ENCODE measurements at regions of chr5 and their contacts with region 1.

Region 1: GRCh38 chr5:43389679-43390329 is 22.4 kb downstream of the CCL28 start:
- DNase-seq: peak; percentile 86
- H3K4me3 ChIP-seq: no peak overlapping the region
- H3K27ac ChIP-seq: no peak overlapping the region
- H3K4me1 ChIP-seq: peaks cover 9% of the 10 kb centered on the region
- H3K27me3 ChIP-seq: no peaks in the 10 kb centered on the region
- CTCF ChIP-seq: peak; percentile 81 to 91

Region 2: DNA sequence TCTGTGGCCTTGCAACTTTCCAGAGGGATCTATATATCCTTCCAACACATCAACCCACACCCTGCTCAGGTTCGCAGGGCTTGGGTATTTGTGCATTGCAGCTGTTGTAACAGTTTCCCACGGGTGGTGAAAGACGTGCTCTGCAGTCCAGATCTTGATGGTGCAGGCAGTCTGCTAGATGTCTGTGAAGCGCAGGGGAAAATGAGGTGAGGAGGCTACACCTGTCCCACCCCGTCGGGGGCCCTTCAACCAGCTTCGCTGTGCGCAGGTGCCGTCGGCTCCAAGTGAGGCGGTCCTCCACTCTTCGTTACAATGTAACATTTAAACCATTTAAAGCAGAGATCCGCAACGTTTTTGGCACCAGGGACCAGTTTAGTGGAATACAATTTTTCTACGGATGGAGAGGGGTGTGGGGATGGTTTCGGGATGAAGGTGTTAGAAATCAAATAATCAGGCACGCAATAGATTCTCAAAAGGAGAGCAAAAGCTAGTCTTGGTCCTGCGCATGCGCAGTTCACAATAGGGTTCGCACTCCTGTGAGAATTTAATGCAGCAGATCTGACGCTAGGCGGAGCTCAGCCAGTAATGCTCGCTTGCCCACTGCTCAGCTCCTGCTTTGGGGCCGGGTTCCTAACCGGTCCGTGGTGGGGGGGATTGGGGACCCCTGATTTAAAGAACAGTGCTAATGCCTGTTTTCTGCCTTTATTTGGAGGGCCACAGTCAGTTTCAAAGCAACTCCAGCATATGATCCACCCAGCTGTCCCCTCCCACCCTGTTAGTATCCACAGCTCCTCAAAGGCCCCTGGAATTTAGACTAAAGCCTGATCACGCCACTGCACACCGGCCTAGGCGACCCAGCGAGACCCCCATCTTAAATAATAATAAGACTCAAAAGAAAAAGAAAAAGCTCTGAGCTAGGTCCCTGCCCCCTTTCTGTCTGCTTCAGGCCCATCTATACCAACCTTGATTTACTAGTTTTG is 481.0 kb before region 1 on chr5:
- CTCF ChIA-PET with region 1: no interaction called
- dilution Hi-C with region 1: no loop called
- in situ Hi-C with region 1: loop called (anchors 25 kb)
- intact Hi-C with region 1: loop called (anchors 1 kb)
- DNase-seq: peak; percentile 71
- H3K4me3 ChIP-seq: peak overlapping the region; percentile 45 to 52 (median 46)
- H3K27ac ChIP-seq: no peak overlapping the region
- H3K4me1 ChIP-seq: no peaks in the 10 kb centered on the region
- H3K27me3 ChIP-seq: no peaks in the 10 kb centered on the region
- CTCF ChIP-seq: peak; percentile 79 to 86

Region 3: GRCh38 chr5:43105369-43106289 is 284.2 kb before region 1 on chr5:
- CTCF ChIA-PET with region 1: no interaction called
- dilution Hi-C with region 1: no loop called
- in situ Hi-C with region 1: loop called in 1 of 2 experiments (anchors 10 kb)
- intact Hi-C with region 1: loop called (anchors 1 kb)
- DNase-seq: peak; percentile 88
- H3K4me3 ChIP-seq: peak overlapping the region; percentile 6 to 42 (median 35)
- H3K27ac ChIP-seq: no peak overlapping the region
- H3K4me1 ChIP-seq: peaks cover 4% of the 10 kb centered on the region
- H3K27me3 ChIP-seq: no peaks in the 10 kb centered on the region
- CTCF ChIP-seq: peak; percentile 100

Region 4: GRCh38 chr5:43227655-43228054 is 162.1 kb before region 1 on chr5:
- CTCF ChIA-PET with region 1: interaction called, 4 read pairs
- dilution Hi-C with region 1: no loop called
- in situ Hi-C with region 1: loop called (anchors 5 kb)
- intact Hi-C with region 1: loop called (anchors 1 kb)
- DNase-seq: peak; percentile 38
- H3K4me3 ChIP-seq: no peak overlapping the region
- H3K27ac ChIP-seq: no peak overlapping the region
- H3K4me1 ChIP-seq: no peaks in the 10 kb centered on the region
- H3K27me3 ChIP-seq: no peaks in the 10 kb centered on the region
- CTCF ChIP-seq: peak; percentile 51 to 55

Region 5: GRCh38 chr5:43281840-43282658 is 107.8 kb before region 1 on chr5:
- CTCF ChIA-PET with region 1: no interaction called
- dilution Hi-C with region 1: no loop called
- in situ Hi-C with region 1: no loop called
- intact Hi-C with region 1: no loop called
- DNase-seq: peak; percentile 70
- H3K4me3 ChIP-seq: no peak overlapping the region
- H3K27ac ChIP-seq: no peak overlapping the region
- H3K4me1 ChIP-seq: peaks cover 20% of the 10 kb centered on the region
- H3K27me3 ChIP-seq: no peaks in the 10 kb centered on the region
- CTCF ChIP-seq: peak in 1 of 2 donors; percentile 13

Region 6: DNA sequence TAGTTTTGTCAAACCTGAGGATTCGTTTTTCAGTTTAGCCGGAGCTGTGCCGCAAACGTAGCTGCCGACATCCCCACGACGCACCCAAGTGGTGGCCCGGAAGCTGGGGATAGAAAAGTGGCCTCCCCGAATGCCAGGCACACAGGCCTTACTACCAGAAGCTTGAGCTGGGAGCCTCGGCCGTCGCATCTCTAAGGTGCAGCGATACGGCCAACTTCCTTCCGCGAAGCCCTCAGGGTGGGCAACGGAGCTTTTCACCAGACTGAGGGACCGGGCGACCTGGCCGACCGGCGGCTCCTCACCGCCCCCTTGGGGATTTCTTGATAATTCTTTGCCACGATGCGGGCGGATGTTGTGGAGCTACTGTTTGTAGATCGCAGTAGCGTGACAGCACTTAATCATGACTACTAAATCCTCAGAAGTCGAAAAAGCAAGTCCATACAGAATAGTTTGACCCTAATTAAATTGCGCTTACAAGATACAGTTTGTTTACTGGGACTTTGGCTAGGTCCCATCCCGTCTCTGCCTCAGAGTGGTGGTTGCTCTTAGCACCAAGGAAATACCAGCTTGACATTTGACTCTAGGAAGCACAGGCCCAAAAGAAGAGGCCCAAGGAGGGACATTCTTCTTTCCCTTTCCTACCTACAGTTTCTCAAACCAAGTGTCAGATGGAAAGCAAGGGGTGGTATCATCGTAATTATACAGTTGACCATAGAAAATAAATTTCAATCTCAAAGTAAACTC is 94.5 kb after region 1 on chr5:
- CTCF ChIA-PET with region 1: interaction called, 3 read pairs
- dilution Hi-C with region 1: no loop called
- in situ Hi-C with region 1: loop called in 1 of 2 experiments (anchors 10 kb)
- intact Hi-C with region 1: no loop called
- DNase-seq: peak; percentile 80
- H3K4me3 ChIP-seq: peak overlapping the region; percentile 88 to 94 (median 92)
- H3K27ac ChIP-seq: peak overlapping the region; percentile 90
- H3K4me1 ChIP-seq: peaks cover 4% of the 10 kb centered on the region
- H3K27me3 ChIP-seq: no peaks in the 10 kb centered on the region
- CTCF ChIP-seq: peak; percentile 71 to 73

Measured in mammary epithelial cell (primary cell).